CD4-positive, alpha-beta T cell (primary cell): ENCODE measurements at regions of chr12 and their contacts with region 1.

Region 1: GRCh38 chr12:57452937-57453509 is 2.1 kb upstream of the INHBE start:
- DNase-seq: peak in 8 of 14 experiments; percentile 32 to 72 (median 45)
- ATAC-seq: peak; percentile 59
- H3K4me3 ChIP-seq: no peak overlapping the region
- H3K4me3 Mint-ChIP-seq: no peak overlapping the region
- H3K27ac ChIP-seq: no peak overlapping the region
- H3K27ac Mint-ChIP-seq: no peak overlapping the region
- H3K4me1 ChIP-seq: peaks cover 10% of the 10 kb centered on the region
- H3K4me1 Mint-ChIP-seq: peaks cover 5% of the 10 kb centered on the region
- H3K27me3 ChIP-seq: peaks cover 0 to 4% of the 10 kb centered on the region in 2 experiments
- H3K27me3 Mint-ChIP-seq: no peaks in the 10 kb centered on the region
- CTCF ChIP-seq: peak; percentile 55

Region 2: GRCh38 chr12:57268264-57268663 is 184.8 kb before region 1 on chr12:
- CTCF ChIA-PET with region 1: interaction called, 5 read pairs
- POLR2A ChIA-PET with region 1: no interaction called
- intact Hi-C with region 1: loop called (anchors 1 to 10 kb)
- DNase-seq: no peak
- ATAC-seq: no peak
- H3K4me3 ChIP-seq: no peak overlapping the region
- H3K4me3 Mint-ChIP-seq: no peak overlapping the region
- H3K27ac ChIP-seq: peak overlapping the region in 1 of 2 donors; percentile 7
- H3K27ac Mint-ChIP-seq: no peak overlapping the region
- H3K4me1 ChIP-seq: peaks cover 3% of the 10 kb centered on the region
- H3K4me1 Mint-ChIP-seq: no peaks in the 10 kb centered on the region
- H3K27me3 ChIP-seq: no peaks in the 10 kb centered on the region
- H3K27me3 Mint-ChIP-seq: no peaks in the 10 kb centered on the region
- CTCF ChIP-seq: no peak

Region 3: GRCh38 chr12:57309420-57309819 is 143.6 kb before region 1 on chr12:
- CTCF ChIA-PET with region 1: interaction called, 4 read pairs
- POLR2A ChIA-PET with region 1: no interaction called
- intact Hi-C with region 1: loop called in 1 of 2 experiments (anchors 5 kb)
- DNase-seq: no peak
- ATAC-seq: no peak
- H3K4me3 ChIP-seq: no peak overlapping the region
- H3K4me3 Mint-ChIP-seq: no peak overlapping the region
- H3K27ac ChIP-seq: no peak overlapping the region
- H3K27ac Mint-ChIP-seq: no peak overlapping the region
- H3K4me1 ChIP-seq: no peaks in the 10 kb centered on the region
- H3K4me1 Mint-ChIP-seq: no peaks in the 10 kb centered on the region
- H3K27me3 ChIP-seq: no peaks in the 10 kb centered on the region
- H3K27me3 Mint-ChIP-seq: no peaks in the 10 kb centered on the region
- CTCF ChIP-seq: no peak

Region 4: GRCh38 chr12:57430931-57431720 is 21.9 kb before region 1 on chr12 and contains the start of gene R3HDM2:
- CTCF ChIA-PET with region 1: interaction called, 4 read pairs
- POLR2A ChIA-PET with region 1: interaction called, 10 read pairs
- intact Hi-C with region 1: loop called in 1 of 2 experiments (anchors 2 kb)
- DNase-seq: peak; percentile 88 to 98 (median 95)
- ATAC-seq: peak; percentile 92
- H3K4me3 ChIP-seq: peak within 1 kb of the TSS; percentile 70
- H3K4me3 Mint-ChIP-seq: peak within 1 kb of the TSS; percentile 99
- H3K27ac ChIP-seq: peak within 1 kb of the TSS; percentile 82 to 94
- H3K27ac Mint-ChIP-seq: peak within 1 kb of the TSS; percentile 99
- H3K4me1 ChIP-seq: peaks cover 29% of the 10 kb centered on the region
- H3K4me1 Mint-ChIP-seq: peaks cover 41% of the 10 kb centered on the region
- H3K27me3 ChIP-seq: no peaks in the 10 kb centered on the region
- H3K27me3 Mint-ChIP-seq: no peaks in the 10 kb centered on the region
- CTCF ChIP-seq: no peak
- total RNA-seq, gene R3HDM2: 106 to 115 TPM